Activated naive CD4-positive, alpha-beta T cell treated with anti-CD3 and anti-CD28 coated beads for 36 hours (primary cell): ENCODE measurements at regions of chr12 and their contacts with region 1.

Region 1: GRCh38 chr12:92111256-92111655 is 34.4 kb downstream of the BTG1 start:
- DNase-seq: no peak
- H3K4me3 Mint-ChIP-seq: peak overlapping the region; percentile 71
- H3K27ac Mint-ChIP-seq: peak overlapping the region; percentile 91
- H3K4me1 Mint-ChIP-seq: peaks cover 81% of the 10 kb centered on the region
- H3K27me3 Mint-ChIP-seq: no peaks in the 10 kb centered on the region

Region 2: GRCh38 chr12:92123780-92124688 is 12.8 kb after region 1 on chr12:
- CTCF ChIA-PET with region 1: interaction called, 5 read pairs
- intact Hi-C with region 1: loop called (anchors 1 kb)
- DNase-seq: no peak
- H3K4me3 Mint-ChIP-seq: peak overlapping the region; percentile 34
- H3K27ac Mint-ChIP-seq: peak overlapping the region; percentile 91
- H3K4me1 Mint-ChIP-seq: peaks cover 77% of the 10 kb centered on the region
- H3K27me3 Mint-ChIP-seq: no peaks in the 10 kb centered on the region

Region 3: DNA sequence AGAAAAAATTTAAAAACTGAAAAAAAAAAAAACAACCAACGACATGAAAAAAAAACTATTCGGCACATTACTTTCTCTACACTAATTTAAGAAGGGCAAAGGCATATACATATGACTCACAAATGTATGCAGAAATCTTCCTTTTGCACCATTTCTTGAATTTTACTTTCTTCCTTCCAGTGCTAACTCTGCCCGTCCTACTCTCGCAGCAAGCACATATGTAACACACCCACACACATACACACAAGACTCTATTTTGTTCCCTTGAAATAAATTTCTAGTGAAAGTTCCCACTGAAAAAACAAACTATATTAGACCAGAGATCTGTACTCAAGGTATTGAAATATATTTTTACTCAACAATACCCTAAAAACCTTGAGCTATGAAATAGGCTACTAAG is 19.7 kb after region 1 on chr12:
- CTCF ChIA-PET with region 1: interaction called, 3 read pairs
- intact Hi-C with region 1: loop called (anchors 1 kb)
- DNase-seq: no peak
- H3K4me3 Mint-ChIP-seq: peak overlapping the region; percentile 79
- H3K27ac Mint-ChIP-seq: peak overlapping the region; percentile 99
- H3K4me1 Mint-ChIP-seq: peaks cover 79% of the 10 kb centered on the region
- H3K27me3 Mint-ChIP-seq: no peaks in the 10 kb centered on the region